ENCODE measurements at regions of chr2 and their contacts with region 1.

Region 1: DNA sequence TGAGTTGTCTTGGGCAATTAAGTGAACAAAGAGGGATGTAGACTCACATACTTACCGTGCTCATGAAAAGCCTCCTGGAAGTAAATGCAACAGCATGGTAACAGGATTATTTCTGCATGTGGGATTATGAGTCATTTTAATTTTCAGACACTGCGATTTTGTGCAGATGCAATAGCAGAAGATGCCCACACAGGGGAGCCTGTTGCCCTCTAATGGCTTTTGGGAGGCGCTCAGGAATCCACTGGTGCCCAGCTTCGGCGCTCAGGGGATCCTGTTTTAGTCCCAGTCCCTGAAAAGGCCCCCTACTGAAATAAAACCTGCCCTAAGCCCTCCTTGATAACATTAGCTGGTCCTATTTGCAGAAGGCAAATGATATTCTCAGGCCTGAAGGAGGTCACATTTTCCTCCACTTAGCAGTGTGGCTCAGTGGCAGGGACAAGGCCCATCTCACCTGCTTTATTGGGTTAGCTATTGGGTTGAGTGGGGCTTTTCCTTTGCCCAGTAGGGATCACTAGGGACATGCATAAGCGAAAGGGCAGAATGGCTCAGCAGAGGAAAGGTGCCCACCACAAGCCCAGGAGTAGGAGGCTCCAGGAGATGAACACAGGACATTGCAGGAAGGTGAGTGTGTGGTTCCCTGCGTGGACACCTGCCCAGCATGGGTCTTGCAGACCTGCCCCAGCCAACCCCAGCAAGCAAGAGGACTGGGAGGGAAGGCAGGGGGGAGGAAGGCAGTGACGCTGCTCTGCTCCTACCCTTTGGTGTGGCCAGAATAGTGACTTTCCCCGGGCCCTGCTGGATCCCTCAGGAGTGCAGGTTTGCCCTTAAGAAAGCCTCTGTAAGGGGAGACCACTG is 26.5 kb upstream of the KCNS3 start:
- DNase-seq: no peak
- H3K4me3 ChIP-seq: no peak overlapping the region
- H3K27ac ChIP-seq: no peak overlapping the region
- H3K4me1 ChIP-seq: no peaks in the 10 kb centered on the region
- H3K27me3 ChIP-seq: no peaks in the 10 kb centered on the region
- CTCF ChIP-seq: peak in 1 of 3 donors; percentile 28
- EP300 ChIP-seq: no peak
- POLR2A ChIP-seq: no peak

Region 2: GRCh38 chr2:17753803-17754663 is 97.9 kb before region 1 on chr2 and contains the starts of genes GEN1 and SMC6:
- intact Hi-C with region 1: no loop called
- DNase-seq: peak; percentile 87 to 92 (median 90)
- H3K4me3 ChIP-seq: peak within 1 kb of the TSS; percentile 97
- H3K27ac ChIP-seq: peak within 1 kb of the TSS; percentile 82 to 92
- H3K4me1 ChIP-seq: peaks cover 4% of the 10 kb centered on the region
- H3K27me3 ChIP-seq: no peaks in the 10 kb centered on the region
- CTCF ChIP-seq: no peak
- EP300 ChIP-seq: no peak
- POLR2A ChIP-seq: no peak
- total RNA-seq, gene GEN1: 1.0 to 4.7 (median 2.3) TPM
- total RNA-seq, gene SMC6: 10.2 to 16.8 (median 13.2) TPM

Region 3: GRCh38 chr2:18149645-18150246 is 297.8 kb after region 1 on chr2:
- intact Hi-C with region 1: loop called in 1 of 4 experiments (anchors 10 kb)
- DNase-seq: no peak
- H3K4me3 ChIP-seq: no peak overlapping the region
- H3K27ac ChIP-seq: no peak overlapping the region
- H3K4me1 ChIP-seq: no peaks in the 10 kb centered on the region
- H3K27me3 ChIP-seq: no peaks in the 10 kb centered on the region
- CTCF ChIP-seq: no peak
- EP300 ChIP-seq: no peak
- POLR2A ChIP-seq: no peak

Region 4: DNA sequence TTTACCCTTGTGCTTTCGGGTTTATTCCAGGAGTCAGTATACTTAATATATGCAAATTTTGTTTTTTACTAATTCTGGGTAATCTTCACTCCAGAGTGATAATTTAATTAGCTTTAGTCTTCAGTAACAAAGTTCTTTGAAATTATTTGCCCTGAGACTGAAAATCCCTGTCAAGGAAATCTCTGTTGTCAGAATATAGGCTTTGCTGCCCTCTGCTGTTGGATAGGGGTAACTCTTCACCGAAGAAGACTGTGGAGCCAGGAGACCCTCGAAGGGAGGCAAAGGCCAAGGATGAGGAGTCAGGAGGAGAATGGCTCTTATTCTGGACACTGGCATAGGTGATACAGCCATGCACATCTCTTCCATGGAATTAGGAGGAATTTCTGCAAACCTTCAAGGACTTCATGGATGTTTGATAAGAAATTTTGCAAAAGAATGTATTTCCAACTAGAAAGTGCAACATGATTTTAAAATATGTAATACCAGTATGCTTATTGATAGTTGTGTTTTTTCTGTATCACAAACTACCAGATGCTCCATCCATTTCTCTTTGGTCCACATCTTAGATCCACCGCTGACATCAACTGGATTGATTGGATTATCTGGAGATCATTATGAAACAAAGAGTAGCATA is 526.2 kb after region 1 on chr2:
- intact Hi-C with region 1: loop called in 1 of 4 experiments (anchors 10 kb)
- DNase-seq: no peak
- H3K4me3 ChIP-seq: no peak overlapping the region
- H3K27ac ChIP-seq: no peak overlapping the region
- H3K4me1 ChIP-seq: no peaks in the 10 kb centered on the region
- H3K27me3 ChIP-seq: no peaks in the 10 kb centered on the region
- CTCF ChIP-seq: peak in 1 of 3 donors; percentile 42
- EP300 ChIP-seq: no peak
- POLR2A ChIP-seq: no peak

Region 5: GRCh38 chr2:18546567-18546966 is 694.6 kb after region 1 on chr2:
- intact Hi-C with region 1: no loop called
- DNase-seq: no peak
- H3K4me3 ChIP-seq: no peak overlapping the region
- H3K27ac ChIP-seq: no peak overlapping the region
- H3K4me1 ChIP-seq: peaks cover 7% of the 10 kb centered on the region
- H3K27me3 ChIP-seq: no peaks in the 10 kb centered on the region
- CTCF ChIP-seq: no peak
- EP300 ChIP-seq: no peak
- POLR2A ChIP-seq: no peak

Measured in ovary (tissue), 10 donors.